MCF 10A (cell line): ENCODE measurements at regions of chr1 and their contacts with region 1.

Region 1: DNA sequence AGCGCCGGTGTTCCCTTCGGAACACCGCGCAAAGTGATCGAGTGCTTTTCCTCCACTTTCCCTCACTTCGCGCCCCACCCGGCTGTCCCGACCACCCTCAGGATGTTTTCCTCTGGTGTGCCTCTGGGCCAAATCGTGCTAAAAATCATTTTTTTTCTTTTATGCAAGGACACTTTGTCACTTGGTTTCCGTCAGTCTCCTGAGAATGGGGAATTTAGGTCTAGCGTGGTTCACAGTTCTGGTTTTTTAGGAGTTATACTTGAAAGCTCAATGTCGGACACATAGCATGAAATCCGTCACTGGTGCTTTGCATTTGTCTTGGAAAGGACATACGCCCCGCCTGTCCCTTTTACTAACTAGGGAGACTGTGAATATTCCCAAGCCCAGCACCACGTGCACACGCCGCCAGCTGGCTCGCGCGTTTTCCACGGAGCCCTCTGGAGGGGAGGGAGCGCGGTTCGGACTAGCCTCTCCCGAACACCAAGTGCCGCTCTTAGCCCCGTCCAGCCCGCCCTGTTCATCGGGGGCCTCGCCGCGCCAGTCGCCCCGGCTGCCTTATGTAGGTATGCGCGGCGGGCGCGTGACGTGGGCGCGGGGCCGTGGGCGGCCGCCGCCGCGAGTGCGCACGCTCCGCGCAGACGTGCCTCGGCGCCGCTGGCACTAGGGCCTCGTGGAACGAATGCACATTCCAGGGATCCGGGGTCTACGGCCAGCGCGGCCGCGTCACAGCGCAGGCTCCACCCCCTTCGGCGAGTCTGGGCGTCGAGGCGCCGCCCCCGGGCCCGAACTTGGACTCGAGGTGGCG is 572 bp upstream of the IRF2BP2 start:
- DNase-seq: peak; percentile 96
- H3K4me3 Mint-ChIP-seq: peak overlapping the region; percentile 95
- H3K27ac Mint-ChIP-seq: peak overlapping the region; percentile 95
- H3K4me1 Mint-ChIP-seq: peaks cover 51% of the 10 kb centered on the region
- H3K27me3 Mint-ChIP-seq: no peaks in the 10 kb centered on the region
- CTCF ChIP-seq: no peak

Region 2: GRCh38 chr1:233843525-233844204 is 766.9 kb before region 1 on chr1:
- CTCF ChIA-PET with region 1: no interaction called
- POLR2A ChIA-PET with region 1: no interaction called
- intact Hi-C with region 1: no loop called
- DNase-seq: peak; percentile 78
- H3K4me3 Mint-ChIP-seq: no peak overlapping the region
- H3K27ac Mint-ChIP-seq: no peak overlapping the region
- H3K4me1 Mint-ChIP-seq: no peaks in the 10 kb centered on the region
- H3K27me3 Mint-ChIP-seq: no peaks in the 10 kb centered on the region
- CTCF ChIP-seq: no peak

Region 3: DNA sequence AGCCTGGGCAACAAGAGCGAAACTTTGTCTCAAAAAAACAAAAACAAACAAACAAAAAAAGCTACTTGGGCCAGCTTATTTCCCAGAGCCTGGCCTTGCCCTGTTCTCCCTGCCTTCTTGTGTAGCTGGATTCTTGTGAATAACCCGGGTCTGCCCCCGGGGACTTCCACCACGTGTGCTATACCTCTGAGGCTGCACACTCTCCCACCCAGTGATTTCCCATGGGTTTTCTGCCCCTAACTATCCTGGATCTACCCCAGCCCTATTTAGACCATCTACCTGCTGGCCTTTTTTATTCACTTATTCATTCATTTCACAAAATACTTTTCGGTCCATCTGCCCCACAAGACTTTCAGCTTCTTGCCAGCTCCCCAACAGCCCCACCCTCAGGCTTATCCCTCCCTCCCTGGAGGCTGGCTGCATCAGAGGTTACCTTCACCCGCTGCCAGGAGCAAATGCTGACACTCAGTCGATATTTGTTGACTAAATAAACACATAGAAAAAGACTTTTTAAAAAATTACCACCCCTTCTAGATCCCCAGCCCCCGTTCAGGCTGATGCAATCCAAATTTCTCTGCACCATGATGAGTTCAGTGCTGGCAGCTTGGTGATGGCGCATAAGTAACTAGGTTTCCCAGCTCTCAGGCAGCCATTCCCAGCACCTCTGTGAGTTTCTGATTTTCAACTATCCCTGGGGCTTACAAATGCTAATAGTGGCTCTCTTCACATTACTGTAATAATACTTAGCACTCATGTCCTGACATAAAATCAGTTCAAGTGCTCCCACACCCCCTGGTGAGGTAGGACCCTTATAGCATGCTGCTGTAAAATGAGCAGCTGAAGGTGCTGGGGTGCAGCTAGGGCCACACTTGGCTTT is 100.9 kb before region 1 on chr1:
- CTCF ChIA-PET with region 1: interaction called, 11 read pairs
- POLR2A ChIA-PET with region 1: interaction called, 904 read pairs
- intact Hi-C with region 1: no loop called
- DNase-seq: peak; percentile 84
- H3K4me3 Mint-ChIP-seq: peak overlapping the region; percentile 52
- H3K27ac Mint-ChIP-seq: peak overlapping the region; percentile 85
- H3K4me1 Mint-ChIP-seq: peaks cover 46% of the 10 kb centered on the region
- H3K27me3 Mint-ChIP-seq: no peaks in the 10 kb centered on the region
- CTCF ChIP-seq: no peak

Region 4: GRCh38 chr1:234599617-234600417 is 10.7 kb before region 1 on chr1:
- CTCF ChIA-PET with region 1: interaction called, 12 read pairs
- POLR2A ChIA-PET with region 1: interaction called, 416 read pairs
- intact Hi-C with region 1: no loop called
- DNase-seq: peak; percentile 93
- H3K4me3 Mint-ChIP-seq: peak overlapping the region; percentile 80
- H3K27ac Mint-ChIP-seq: peak overlapping the region; percentile 90
- H3K4me1 Mint-ChIP-seq: peaks cover 41% of the 10 kb centered on the region
- H3K27me3 Mint-ChIP-seq: no peaks in the 10 kb centered on the region
- CTCF ChIP-seq: no peak

Region 5: GRCh38 chr1:234683861-234684632 is 73.5 kb after region 1 on chr1:
- CTCF ChIA-PET with region 1: interaction called, 3 read pairs
- POLR2A ChIA-PET with region 1: interaction called, 50 read pairs
- intact Hi-C with region 1: loop called (anchors 1 kb)
- DNase-seq: peak; percentile 100
- H3K4me3 Mint-ChIP-seq: no peak overlapping the region
- H3K27ac Mint-ChIP-seq: peak overlapping the region; percentile 27
- H3K4me1 Mint-ChIP-seq: peaks cover 10% of the 10 kb centered on the region
- H3K27me3 Mint-ChIP-seq: no peaks in the 10 kb centered on the region
- CTCF ChIP-seq: no peak

Region 6: DNA sequence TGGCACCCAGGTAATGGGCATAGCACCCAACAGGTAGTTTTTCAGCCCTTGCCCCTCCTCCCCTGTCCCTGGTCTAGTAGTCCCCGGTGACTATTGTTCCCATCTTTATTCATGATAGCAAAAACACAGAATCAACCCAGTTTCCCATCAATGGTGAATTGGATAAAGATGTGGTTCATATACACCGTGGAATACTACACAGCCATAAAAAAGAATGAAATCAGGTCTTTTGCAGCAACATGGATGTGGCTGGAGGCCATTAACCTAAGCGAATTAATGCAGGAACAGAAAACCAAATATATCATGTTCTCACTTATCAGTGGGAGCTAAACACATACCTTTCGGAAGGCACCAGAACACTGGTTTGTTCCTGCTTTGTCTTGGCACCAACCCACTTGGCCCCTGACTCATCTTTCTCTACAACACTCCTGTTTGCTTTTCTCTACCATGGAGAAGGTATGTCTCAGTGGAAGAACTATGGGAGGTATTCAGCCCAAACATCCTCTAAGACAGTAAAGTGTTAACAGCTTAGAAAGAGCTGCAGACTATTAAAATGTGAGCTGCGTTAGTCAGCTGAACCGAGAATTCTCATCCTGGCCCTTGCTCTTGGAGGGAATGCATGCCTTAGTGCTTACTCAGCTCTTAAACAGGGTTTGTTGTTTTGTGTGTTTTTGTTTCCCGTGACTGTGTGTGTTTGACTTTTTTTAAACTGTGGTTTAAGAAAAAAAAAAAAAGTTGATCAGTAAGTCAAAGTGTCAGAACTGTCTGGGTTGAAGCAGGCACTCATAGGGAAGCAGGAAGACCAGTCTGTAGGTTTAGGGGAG is 315.1 kb after region 1 on chr1:
- CTCF ChIA-PET with region 1: no interaction called
- POLR2A ChIA-PET with region 1: interaction called, 12 read pairs
- intact Hi-C with region 1: loop called (anchors 1 kb)
- DNase-seq: peak; percentile 92
- H3K4me3 Mint-ChIP-seq: peak overlapping the region; percentile 26
- H3K27ac Mint-ChIP-seq: peak overlapping the region; percentile 83
- H3K4me1 Mint-ChIP-seq: peaks cover 20% of the 10 kb centered on the region
- H3K27me3 Mint-ChIP-seq: no peaks in the 10 kb centered on the region
- CTCF ChIP-seq: no peak

Region 7: GRCh38 chr1:235018161-235018560 is 407.6 kb after region 1 on chr1:
- CTCF ChIA-PET with region 1: interaction called, 5 read pairs
- POLR2A ChIA-PET with region 1: interaction called, 21 read pairs
- intact Hi-C with region 1: loop called (anchors 1 kb)
- DNase-seq: peak; percentile 100
- H3K4me3 Mint-ChIP-seq: no peak overlapping the region
- H3K27ac Mint-ChIP-seq: peak overlapping the region; percentile 0
- H3K4me1 Mint-ChIP-seq: peaks cover 25% of the 10 kb centered on the region
- H3K27me3 Mint-ChIP-seq: no peaks in the 10 kb centered on the region
- CTCF ChIP-seq: no peak